AG04450 (cell line): ENCODE measurements at regions of chr11 and their contacts with region 1.

Region 1: DNA sequence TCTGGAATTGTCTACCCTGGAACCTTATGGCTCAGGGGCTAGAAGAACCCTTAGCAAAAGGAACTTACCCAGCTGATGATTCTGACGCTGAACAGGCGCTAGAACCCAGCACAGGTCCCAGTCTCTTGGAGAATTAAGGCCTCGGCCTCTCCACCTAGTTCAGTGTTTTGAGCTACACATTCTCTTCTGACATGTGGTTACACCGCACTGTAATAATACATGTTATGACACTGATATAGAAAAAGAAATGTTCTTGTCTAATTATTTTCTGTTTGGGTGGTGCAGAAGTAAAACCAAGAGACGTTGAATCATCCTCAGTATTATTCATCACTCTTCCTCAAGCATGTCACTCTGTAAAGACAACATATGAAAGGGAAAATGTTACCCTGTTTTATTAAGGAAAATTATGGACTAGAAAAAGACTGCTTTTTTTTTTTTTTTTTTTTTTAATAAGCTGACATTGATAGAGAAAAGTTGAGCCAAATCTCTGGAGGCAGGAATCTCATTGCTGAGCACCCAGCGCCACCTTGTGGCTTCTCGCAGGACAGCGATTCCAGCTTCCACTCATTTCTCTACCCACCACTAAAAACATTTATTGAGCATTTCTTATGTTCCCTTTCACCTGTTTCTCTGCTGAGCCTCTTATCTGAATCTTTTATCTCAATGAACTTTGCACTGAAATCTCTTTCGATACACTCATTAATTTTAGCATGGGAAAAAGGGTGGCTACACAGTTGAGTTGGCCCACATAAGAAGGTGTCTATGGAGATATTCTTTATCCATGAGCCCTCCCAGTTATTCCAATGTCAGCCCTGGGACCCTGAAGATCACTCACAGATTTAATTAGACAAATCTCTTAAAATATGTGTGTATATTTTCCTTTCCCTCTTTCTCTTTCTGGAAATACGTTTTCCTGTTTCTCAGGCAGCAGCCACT is 12.6 kb upstream of the APLNR start:
- DNase-seq: peak; percentile 39
- H3K4me3 ChIP-seq: no peak overlapping the region
- H3K27ac ChIP-seq: no peak overlapping the region
- H3K27me3 ChIP-seq: no peaks in the 10 kb centered on the region
- CTCF ChIP-seq: peak; percentile 96

Region 2: GRCh38 chr11:56990702-56991101 is 258.9 kb before region 1 on chr11:
- CTCF ChIA-PET with region 1: interaction called, 12 read pairs
- POLR2A ChIA-PET with region 1: no interaction called
- DNase-seq: no peak
- H3K4me3 ChIP-seq: no peak overlapping the region
- H3K27ac ChIP-seq: no peak overlapping the region
- H3K27me3 ChIP-seq: no peaks in the 10 kb centered on the region
- CTCF ChIP-seq: no peak

Region 3: GRCh38 chr11:57103899-57104605 is 145.6 kb before region 1 on chr11:
- CTCF ChIA-PET with region 1: interaction called, 16 read pairs
- POLR2A ChIA-PET with region 1: no interaction called
- DNase-seq: no peak
- H3K4me3 ChIP-seq: no peak overlapping the region
- H3K27ac ChIP-seq: no peak overlapping the region
- H3K27me3 ChIP-seq: no peaks in the 10 kb centered on the region
- CTCF ChIP-seq: no peak

Region 4: GRCh38 chr11:57192316-57192715 is 57.3 kb before region 1 on chr11:
- CTCF ChIA-PET with region 1: interaction called, 10 read pairs
- POLR2A ChIA-PET with region 1: no interaction called
- DNase-seq: no peak
- H3K4me3 ChIP-seq: no peak overlapping the region
- H3K27ac ChIP-seq: no peak overlapping the region
- H3K27me3 ChIP-seq: peaks cover 2% of the 10 kb centered on the region
- CTCF ChIP-seq: no peak

Region 5: GRCh38 chr11:57237204-57237681 is 12.4 kb before region 1 on chr11 and contains the start of gene APLNR:
- CTCF ChIA-PET with region 1: interaction called, 62 read pairs
- POLR2A ChIA-PET with region 1: no interaction called
- DNase-seq: no peak
- H3K4me3 ChIP-seq: no peak within 1 kb of the TSS
- H3K27ac ChIP-seq: no peak within 1 kb of the TSS
- H3K27me3 ChIP-seq: peaks cover 43% of the 10 kb centered on the region
- CTCF ChIP-seq: no peak
- polyA plus RNA-seq, gene APLNR: not detected in 2 replicates

Region 6: GRCh38 chr11:57318178-57318577 is 68.5 kb after region 1 on chr11:
- CTCF ChIA-PET with region 1: interaction called, 23 read pairs
- POLR2A ChIA-PET with region 1: interaction called, 5 read pairs
- DNase-seq: no peak
- H3K4me3 ChIP-seq: no peak overlapping the region
- H3K27ac ChIP-seq: no peak overlapping the region
- H3K27me3 ChIP-seq: no peaks in the 10 kb centered on the region
- CTCF ChIP-seq: no peak

Region 7: GRCh38 chr11:57834852-57835251 is 585.2 kb after region 1 on chr11:
- CTCF ChIA-PET with region 1: no interaction called
- POLR2A ChIA-PET with region 1: no interaction called
- DNase-seq: no peak
- H3K4me3 ChIP-seq: no peak overlapping the region
- H3K27ac ChIP-seq: no peak overlapping the region
- H3K27me3 ChIP-seq: no peaks in the 10 kb centered on the region
- CTCF ChIP-seq: no peak